ENCODE measurements at regions of chr5 and their contacts with region 1.

Region 1: DNA sequence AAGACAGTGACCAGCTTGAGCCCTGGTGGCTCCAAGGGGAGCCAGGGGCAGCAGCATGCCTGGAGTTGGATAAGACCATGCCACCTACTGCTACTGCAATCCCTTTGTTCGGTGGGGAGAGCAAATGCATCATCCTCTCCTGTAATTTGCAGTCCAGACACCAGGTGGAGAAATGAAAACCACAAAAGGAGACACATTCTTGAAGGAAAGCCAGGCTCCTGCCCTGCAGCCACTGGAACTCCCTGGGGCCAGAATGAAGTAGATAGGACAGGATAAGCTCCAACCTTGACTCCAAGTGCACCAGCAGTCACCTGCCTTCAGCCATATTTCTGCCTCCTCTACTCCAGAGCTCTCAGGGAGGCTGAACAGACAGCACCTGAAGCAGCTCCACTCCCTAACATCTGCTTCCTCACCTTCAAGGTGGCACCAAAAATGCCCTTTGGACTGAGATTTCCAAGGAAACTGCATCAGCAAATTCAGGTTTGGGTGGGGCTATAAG is 65.1 kb upstream of the IQGAP2 start:
- DNase-seq: peak; percentile 63
- ATAC-seq: peak; percentile 39
- H3K4me3 ChIP-seq: no peak overlapping the region
- H3K4me3 Mint-ChIP-seq: no peak overlapping the region
- H3K27ac ChIP-seq: no peak overlapping the region
- H3K27ac Mint-ChIP-seq: no peak overlapping the region
- H3K4me1 ChIP-seq: peaks cover 4 to 11% of the 10 kb centered on the region in 2 donors
- H3K4me1 Mint-ChIP-seq: peaks cover 6% of the 10 kb centered on the region
- H3K27me3 ChIP-seq: no peaks in the 10 kb centered on the region
- H3K27me3 Mint-ChIP-seq: peaks cover 9% of the 10 kb centered on the region
- CTCF ChIP-seq: peak; percentile 23

Region 2: GRCh38 chr5:76303921-76304320 is 34.1 kb before region 1 on chr5:
- CTCF ChIA-PET with region 1: no interaction called
- POLR2A ChIA-PET with region 1: no interaction called
- intact Hi-C with region 1: no loop called
- DNase-seq: peak; percentile 41
- ATAC-seq: peak; percentile 24
- H3K4me3 ChIP-seq: no peak overlapping the region
- H3K4me3 Mint-ChIP-seq: no peak overlapping the region
- H3K27ac ChIP-seq: no peak overlapping the region
- H3K27ac Mint-ChIP-seq: no peak overlapping the region
- H3K4me1 ChIP-seq: no peaks in the 10 kb centered on the region
- H3K4me1 Mint-ChIP-seq: peaks cover 7% of the 10 kb centered on the region
- H3K27me3 ChIP-seq: no peaks in the 10 kb centered on the region
- H3K27me3 Mint-ChIP-seq: peaks cover 24% of the 10 kb centered on the region
- CTCF ChIP-seq: no peak

Region 3: GRCh38 chr5:76544268-76544926 is 206.4 kb after region 1 on chr5:
- CTCF ChIA-PET with region 1: interaction called, 4 read pairs
- POLR2A ChIA-PET with region 1: no interaction called
- intact Hi-C with region 1: loop called (anchors 10 kb)
- DNase-seq: peak; percentile 45
- ATAC-seq: no peak
- H3K4me3 ChIP-seq: no peak overlapping the region
- H3K4me3 Mint-ChIP-seq: no peak overlapping the region
- H3K27ac ChIP-seq: no peak overlapping the region
- H3K27ac Mint-ChIP-seq: no peak overlapping the region
- H3K4me1 ChIP-seq: peaks cover 41 to 44% of the 10 kb centered on the region in 2 donors
- H3K4me1 Mint-ChIP-seq: peaks cover 51% of the 10 kb centered on the region
- H3K27me3 ChIP-seq: no peaks in the 10 kb centered on the region
- H3K27me3 Mint-ChIP-seq: no peaks in the 10 kb centered on the region
- CTCF ChIP-seq: peak; percentile 37

Region 4: GRCh38 chr5:76582230-76583162 is 244.5 kb after region 1 on chr5:
- CTCF ChIA-PET with region 1: interaction called, 11 read pairs
- POLR2A ChIA-PET with region 1: no interaction called
- intact Hi-C with region 1: no loop called
- DNase-seq: peak; percentile 49
- ATAC-seq: peak; percentile 56
- H3K4me3 ChIP-seq: peak overlapping the region in 1 of 5 experiments; percentile 22
- H3K4me3 Mint-ChIP-seq: no peak overlapping the region
- H3K27ac ChIP-seq: no peak overlapping the region
- H3K27ac Mint-ChIP-seq: peak overlapping the region; percentile 46
- H3K4me1 ChIP-seq: peaks cover 4 to 12% of the 10 kb centered on the region in 2 donors
- H3K4me1 Mint-ChIP-seq: peaks cover 18% of the 10 kb centered on the region
- H3K27me3 ChIP-seq: no peaks in the 10 kb centered on the region
- H3K27me3 Mint-ChIP-seq: no peaks in the 10 kb centered on the region
- CTCF ChIP-seq: no peak